Activated B cell treated with CpG ODN at 0.5 μM for 24 hours (primary cell): ENCODE measurements at regions of chr5 and their contacts with region 1.

Region 1: DNA sequence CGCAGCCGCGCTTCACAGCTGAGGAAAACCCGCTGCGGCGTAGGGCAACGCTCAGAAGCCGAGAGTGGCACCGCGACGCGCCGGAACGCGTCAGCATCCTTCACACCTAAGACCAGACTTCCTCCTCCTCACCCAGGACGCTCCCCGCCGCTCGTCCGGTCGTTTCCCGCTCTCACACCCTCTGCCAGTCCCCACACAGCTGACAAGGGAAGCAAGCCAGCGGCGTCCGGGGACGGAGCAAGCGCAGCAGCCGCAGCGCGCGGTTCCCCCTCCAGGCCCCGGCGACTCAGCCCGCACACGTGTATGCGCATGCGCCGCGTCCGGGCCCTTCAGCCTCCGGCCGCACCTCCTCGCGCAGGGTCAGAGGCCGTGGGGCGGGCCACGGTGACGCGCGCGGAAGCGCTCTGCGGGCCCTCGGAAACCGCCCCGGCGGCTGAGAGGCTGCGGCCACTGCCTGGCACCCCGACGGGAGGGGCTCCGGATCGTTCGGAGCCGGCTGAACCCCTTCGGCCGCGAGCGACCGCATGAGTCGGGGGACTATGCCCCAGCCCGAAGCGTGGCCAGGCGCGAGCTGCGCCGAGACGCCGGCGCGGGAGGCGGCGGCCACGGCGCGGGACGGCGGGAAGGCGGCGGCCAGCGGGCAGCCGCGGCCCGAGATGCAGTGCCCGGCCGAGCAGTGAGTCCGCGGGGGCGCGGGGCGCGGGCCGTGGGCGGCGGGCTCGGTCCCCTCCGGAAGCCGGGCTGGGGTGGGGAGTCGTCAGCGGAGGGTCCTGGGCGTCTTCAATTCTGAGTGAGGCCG is at the start of gene OTULIN:
- DNase-seq: peak; percentile 90
- ATAC-seq: peak; percentile 78
- H3K4me3 Mint-ChIP-seq: peak within 1 kb of the TSS; percentile 97
- H3K27ac Mint-ChIP-seq: peak within 1 kb of the TSS; percentile 99
- H3K4me1 Mint-ChIP-seq: peaks cover 87% of the 10 kb centered on the region
- H3K27me3 Mint-ChIP-seq: no peaks in the 10 kb centered on the region
- CTCF ChIP-seq: no peak
- total RNA-seq, gene OTULIN: 94.0 and 96.5 TPM in 2 replicates

Region 2: DNA sequence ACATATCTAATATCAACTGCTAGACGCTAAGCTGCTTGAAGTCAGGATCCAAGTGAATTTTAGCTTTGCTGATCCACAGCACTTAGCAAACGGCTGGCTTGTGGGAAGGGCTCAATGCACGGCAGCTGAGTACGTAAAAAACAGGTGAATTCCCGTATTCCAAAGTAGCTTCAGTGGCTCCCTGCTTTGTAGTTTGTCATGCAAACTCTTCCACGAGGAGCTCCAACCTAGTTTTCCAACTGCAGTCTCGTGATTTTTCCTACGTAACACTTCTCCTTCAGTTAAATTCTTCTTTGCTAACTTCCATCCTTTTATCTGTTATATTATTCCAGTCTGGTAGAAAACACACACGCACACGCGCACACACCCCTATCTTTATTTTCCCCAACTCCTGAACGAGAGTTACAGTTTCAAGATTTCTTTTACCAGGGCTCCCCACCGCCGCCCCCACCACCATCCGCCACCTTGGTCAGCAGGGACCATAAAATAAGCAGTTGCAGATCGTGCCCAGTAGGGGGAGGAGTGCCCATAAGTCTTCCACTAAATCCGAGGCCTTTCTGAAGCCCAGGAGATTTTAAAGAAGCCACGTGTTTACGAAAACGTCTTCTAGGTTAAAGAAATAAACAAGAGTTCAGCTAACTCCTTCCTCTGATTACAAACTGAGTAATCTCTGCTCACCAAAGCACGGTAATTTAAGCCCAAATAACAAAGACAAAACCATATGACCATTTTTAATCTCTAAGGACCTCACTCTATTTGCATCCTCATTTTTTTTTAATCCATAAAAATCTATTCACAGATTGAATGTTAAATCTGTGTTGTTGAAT is 556.1 kb before region 1 on chr5:
- CTCF ChIA-PET with region 1: no interaction called
- POLR2A ChIA-PET with region 1: no interaction called
- intact Hi-C with region 1: loop called (anchors 5 kb)
- DNase-seq: no peak
- ATAC-seq: peak; percentile 85
- H3K4me3 Mint-ChIP-seq: peak overlapping the region; percentile 76
- H3K27ac Mint-ChIP-seq: peak overlapping the region; percentile 80
- H3K4me1 Mint-ChIP-seq: peaks cover 40% of the 10 kb centered on the region
- H3K27me3 Mint-ChIP-seq: peaks cover 1% of the 10 kb centered on the region
- CTCF ChIP-seq: no peak

Region 3: GRCh38 chr5:14342306-14342705 is 322.2 kb before region 1 on chr5:
- CTCF ChIA-PET with region 1: no interaction called
- POLR2A ChIA-PET with region 1: no interaction called
- intact Hi-C with region 1: loop called (anchors 5 kb)
- DNase-seq: peak; percentile 33
- ATAC-seq: peak; percentile 99
- H3K4me3 Mint-ChIP-seq: peak overlapping the region; percentile 30
- H3K27ac Mint-ChIP-seq: peak overlapping the region; percentile 75
- H3K4me1 Mint-ChIP-seq: peaks cover 45% of the 10 kb centered on the region
- H3K27me3 Mint-ChIP-seq: no peaks in the 10 kb centered on the region
- CTCF ChIP-seq: no peak

Region 4: DNA sequence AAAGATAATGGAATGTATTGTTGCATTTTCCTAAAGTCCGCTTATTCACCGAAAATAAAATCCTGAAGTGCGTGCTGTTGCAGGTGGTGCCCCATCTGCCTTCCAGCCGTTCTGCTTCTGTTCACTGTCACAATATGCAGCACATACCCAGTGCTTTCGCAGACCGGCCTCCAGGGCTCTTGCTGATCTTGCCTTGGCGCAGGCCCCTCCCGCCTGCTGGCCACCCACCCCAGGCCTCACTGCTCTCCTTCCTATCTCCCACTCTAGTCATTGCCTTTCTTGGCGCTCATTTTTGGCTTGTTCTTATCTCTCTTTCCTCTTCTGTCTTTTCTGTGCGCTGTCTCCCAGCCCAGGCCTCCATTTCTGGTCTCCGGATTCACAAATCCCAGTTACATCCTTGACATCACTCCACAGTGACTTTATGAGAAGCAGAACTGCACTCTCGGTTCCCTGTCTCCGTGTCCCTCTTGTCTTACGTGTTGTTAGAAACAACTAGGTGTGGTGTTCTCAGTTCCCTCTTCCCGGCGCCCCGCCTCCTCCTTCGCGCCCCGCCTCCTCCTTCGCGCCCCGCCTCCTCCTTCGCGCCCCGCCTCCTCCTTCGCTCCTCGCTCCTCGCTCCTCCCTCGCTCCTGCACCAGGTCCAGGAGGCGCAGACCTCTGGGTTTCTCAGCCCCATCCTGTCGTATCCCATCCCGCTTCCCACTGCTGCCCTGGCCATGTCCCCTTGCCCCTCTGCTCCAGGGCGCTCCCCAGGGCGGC is 284.6 kb before region 1 on chr5:
- CTCF ChIA-PET with region 1: no interaction called
- POLR2A ChIA-PET with region 1: no interaction called
- intact Hi-C with region 1: no loop called
- DNase-seq: no peak
- ATAC-seq: peak; percentile 69
- H3K4me3 Mint-ChIP-seq: no peak overlapping the region
- H3K27ac Mint-ChIP-seq: peak overlapping the region; percentile 74
- H3K4me1 Mint-ChIP-seq: peaks cover 22% of the 10 kb centered on the region
- H3K27me3 Mint-ChIP-seq: no peaks in the 10 kb centered on the region
- CTCF ChIP-seq: no peak

Region 5: DNA sequence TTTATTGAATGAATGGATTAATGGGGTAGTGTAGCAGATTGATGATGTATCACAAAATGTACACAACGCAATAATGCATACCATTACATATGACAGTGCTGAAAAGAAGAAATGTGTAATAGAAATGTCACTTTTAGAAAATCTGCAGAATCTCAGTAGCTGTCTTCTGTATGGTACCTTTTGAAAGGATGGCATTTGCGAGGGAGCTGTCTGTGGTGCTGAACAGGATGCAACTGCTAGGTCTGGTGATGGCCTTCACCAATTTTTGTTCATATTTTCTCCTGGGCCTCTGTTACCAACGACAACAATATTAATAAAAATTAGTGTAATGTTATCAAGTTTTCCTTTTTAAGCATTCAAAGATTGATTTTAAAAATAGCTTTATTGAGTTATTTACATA is 36.2 kb before region 1 on chr5:
- CTCF ChIA-PET with region 1: no interaction called
- POLR2A ChIA-PET with region 1: no interaction called
- intact Hi-C with region 1: no loop called
- DNase-seq: no peak
- ATAC-seq: no peak
- H3K4me3 Mint-ChIP-seq: no peak overlapping the region
- H3K27ac Mint-ChIP-seq: no peak overlapping the region
- H3K4me1 Mint-ChIP-seq: no peaks in the 10 kb centered on the region
- H3K27me3 Mint-ChIP-seq: no peaks in the 10 kb centered on the region
- CTCF ChIP-seq: no peak

Region 6: GRCh38 chr5:14676320-14676719 is 11.8 kb after region 1 on chr5:
- CTCF ChIA-PET with region 1: interaction called, 7 read pairs
- POLR2A ChIA-PET with region 1: interaction called, 6 read pairs
- intact Hi-C with region 1: loop called (anchors 1 kb)
- DNase-seq: no peak
- ATAC-seq: peak; percentile 53
- H3K4me3 Mint-ChIP-seq: peak overlapping the region; percentile 76
- H3K27ac Mint-ChIP-seq: peak overlapping the region; percentile 86
- H3K4me1 Mint-ChIP-seq: peaks cover 86% of the 10 kb centered on the region
- H3K27me3 Mint-ChIP-seq: no peaks in the 10 kb centered on the region
- CTCF ChIP-seq: no peak

Region 7: GRCh38 chr5:14693070-14693469 is 28.6 kb after region 1 on chr5:
- CTCF ChIA-PET with region 1: no interaction called
- POLR2A ChIA-PET with region 1: no interaction called
- intact Hi-C with region 1: no loop called
- DNase-seq: no peak
- ATAC-seq: no peak
- H3K4me3 Mint-ChIP-seq: no peak overlapping the region
- H3K27ac Mint-ChIP-seq: no peak overlapping the region
- H3K4me1 Mint-ChIP-seq: no peaks in the 10 kb centered on the region
- H3K27me3 Mint-ChIP-seq: no peaks in the 10 kb centered on the region
- CTCF ChIP-seq: no peak

Region 8: DNA sequence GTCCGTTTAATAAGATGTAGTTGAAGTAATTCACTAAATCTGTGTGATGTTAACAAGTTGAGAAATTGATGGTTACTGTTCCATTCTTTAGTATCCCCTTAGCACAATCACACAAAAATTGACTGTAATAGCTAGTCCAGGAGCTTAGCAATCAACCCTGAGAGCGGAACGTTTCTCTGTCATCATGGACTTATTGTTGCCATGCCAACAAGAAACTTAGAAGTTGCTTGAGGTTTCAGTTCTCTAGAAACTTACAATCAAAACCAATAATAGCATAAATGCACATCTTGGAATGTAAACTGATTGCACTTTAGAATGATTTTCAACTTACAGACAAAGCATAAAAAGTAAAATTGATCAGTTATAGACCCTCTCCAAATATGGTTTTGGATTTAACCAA is 332.5 kb after region 1 on chr5:
- CTCF ChIA-PET with region 1: interaction called, 4 read pairs
- POLR2A ChIA-PET with region 1: interaction called, 3 read pairs
- intact Hi-C with region 1: loop called (anchors 10 kb)
- DNase-seq: no peak
- ATAC-seq: peak; percentile 76
- H3K4me3 Mint-ChIP-seq: peak overlapping the region; percentile 15
- H3K27ac Mint-ChIP-seq: peak overlapping the region; percentile 75
- H3K4me1 Mint-ChIP-seq: peaks cover 59% of the 10 kb centered on the region
- H3K27me3 Mint-ChIP-seq: no peaks in the 10 kb centered on the region
- CTCF ChIP-seq: no peak